ENCODE measurements at regions of chr17 and their contacts with region 1.

Region 1: GRCh38 chr17:44141717-44142285 is at the start of gene HROB:
- DNase-seq: peak; percentile 97
- H3K4me3 Mint-ChIP-seq: peak within 1 kb of the TSS; percentile 95
- H3K27ac Mint-ChIP-seq: peak within 1 kb of the TSS; percentile 95
- H3K4me1 Mint-ChIP-seq: peaks cover 16% of the 10 kb centered on the region
- H3K27me3 Mint-ChIP-seq: no peaks in the 10 kb centered on the region
- total RNA-seq, gene HROB: 23.0 and 23.1 TPM in 2 replicates

Region 2: GRCh38 chr17:43979011-43979410 is 162.8 kb before region 1 on chr17:
- intact Hi-C with region 1: no loop called
- DNase-seq: no peak
- H3K4me3 Mint-ChIP-seq: no peak overlapping the region
- H3K27ac Mint-ChIP-seq: no peak overlapping the region
- H3K4me1 Mint-ChIP-seq: no peaks in the 10 kb centered on the region
- H3K27me3 Mint-ChIP-seq: peaks cover 58% of the 10 kb centered on the region

Region 3: DNA sequence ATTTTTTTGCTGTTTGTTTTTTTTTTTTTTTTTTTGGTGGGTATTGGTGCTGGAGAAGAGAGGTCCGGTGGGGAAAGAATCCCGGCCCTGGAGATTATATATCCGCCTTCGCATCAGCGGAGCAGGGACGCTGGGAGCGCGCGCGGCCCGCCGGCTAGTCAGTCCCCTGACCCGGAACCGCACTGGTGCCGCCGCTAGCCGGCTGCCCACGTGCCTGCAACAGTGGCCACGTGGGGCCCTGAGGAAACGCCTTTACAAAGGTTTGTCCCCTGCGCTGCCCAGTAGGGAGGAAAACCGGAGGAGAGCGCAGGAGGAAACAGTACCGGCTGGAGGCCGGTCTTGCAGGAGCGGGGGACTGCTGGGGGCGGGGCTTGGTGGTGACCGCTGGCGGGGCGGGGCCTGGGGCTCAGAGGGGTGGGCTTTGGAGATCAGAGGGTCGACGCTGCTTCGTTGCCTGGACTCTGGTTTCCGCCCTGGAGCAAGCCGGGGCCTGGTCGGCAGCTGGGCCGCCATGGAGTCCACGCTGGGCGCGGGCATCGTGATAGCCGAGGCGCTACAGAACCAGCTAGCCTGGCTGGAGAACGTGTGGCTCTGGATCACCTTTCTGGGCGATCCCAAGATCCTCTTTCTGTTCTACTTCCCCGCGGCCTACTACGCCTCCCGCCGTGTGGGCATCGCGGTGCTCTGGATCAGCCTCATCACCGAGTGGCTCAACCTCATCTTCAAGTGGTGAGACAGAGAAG is 71.2 kb before region 1 on chr17 and contains the start of gene G6PC3:
- intact Hi-C with region 1: loop called (anchors 1 kb)
- DNase-seq: peak; percentile 78
- H3K4me3 Mint-ChIP-seq: peak within 1 kb of the TSS; percentile 98
- H3K27ac Mint-ChIP-seq: peak within 1 kb of the TSS; percentile 99
- H3K4me1 Mint-ChIP-seq: peaks cover 16% of the 10 kb centered on the region
- H3K27me3 Mint-ChIP-seq: no peaks in the 10 kb centered on the region
- total RNA-seq, gene G6PC3: 33.5 and 34.9 TPM in 2 replicates

Region 4: DNA sequence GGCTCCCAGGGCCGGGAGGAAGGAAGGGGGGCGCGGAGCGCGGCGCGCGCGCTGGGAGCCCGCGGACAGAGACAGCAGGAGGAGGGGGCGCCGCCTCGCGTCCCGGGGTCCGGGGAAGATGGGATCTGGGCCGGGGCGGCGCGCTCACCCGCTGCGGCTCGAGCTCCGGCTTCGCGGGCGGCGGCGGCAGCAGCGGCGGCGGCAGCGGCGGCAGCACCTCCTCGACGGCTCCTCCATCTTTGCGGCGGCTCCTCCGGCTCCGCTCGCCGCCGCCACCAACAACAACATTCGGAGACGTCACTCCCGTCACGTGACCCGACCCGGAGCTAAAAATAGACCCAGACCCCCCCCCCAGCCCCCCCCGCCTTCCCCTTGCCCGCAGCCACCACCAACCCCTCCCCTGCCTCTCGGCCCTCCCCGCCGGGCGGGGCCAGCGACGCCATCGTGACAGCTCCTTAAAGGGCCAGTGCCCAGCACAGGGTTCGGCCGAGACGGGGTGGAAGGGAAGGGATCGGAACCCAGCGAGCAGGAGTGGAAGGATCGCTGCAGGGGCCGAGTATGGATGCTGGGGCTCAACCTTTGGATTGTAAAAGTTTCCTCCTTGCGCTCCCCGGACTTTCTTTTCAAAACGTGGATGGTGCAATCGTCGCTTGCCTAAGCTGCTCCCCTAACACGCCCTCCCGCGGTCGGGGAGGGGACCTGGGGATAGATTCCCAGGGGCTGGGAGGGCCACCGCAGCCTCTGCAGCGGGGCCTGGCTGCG is 18.3 kb before region 1 on chr17 and contains the start of gene HDAC5:
- intact Hi-C with region 1: loop called (anchors 1 kb)
- DNase-seq: peak; percentile 92
- H3K4me3 Mint-ChIP-seq: peak within 1 kb of the TSS; percentile 91
- H3K27ac Mint-ChIP-seq: peak within 1 kb of the TSS; percentile 96
- H3K4me1 Mint-ChIP-seq: peaks cover 25% of the 10 kb centered on the region
- H3K27me3 Mint-ChIP-seq: peaks cover 12% of the 10 kb centered on the region
- total RNA-seq, gene HDAC5: 20.6 and 22.8 TPM in 2 replicates

Region 5: GRCh38 chr17:44170499-44171201 is 28.8 kb after region 1 on chr17 and contains the start of gene ASB16:
- intact Hi-C with region 1: loop called (anchors 1 kb)
- DNase-seq: no peak
- H3K4me3 Mint-ChIP-seq: no peak within 1 kb of the TSS
- H3K27ac Mint-ChIP-seq: no peak within 1 kb of the TSS
- H3K4me1 Mint-ChIP-seq: peaks cover 10% of the 10 kb centered on the region
- H3K27me3 Mint-ChIP-seq: no peaks in the 10 kb centered on the region
- total RNA-seq, gene ASB16: 0.31 and 0.42 TPM in 2 replicates

Region 6: DNA sequence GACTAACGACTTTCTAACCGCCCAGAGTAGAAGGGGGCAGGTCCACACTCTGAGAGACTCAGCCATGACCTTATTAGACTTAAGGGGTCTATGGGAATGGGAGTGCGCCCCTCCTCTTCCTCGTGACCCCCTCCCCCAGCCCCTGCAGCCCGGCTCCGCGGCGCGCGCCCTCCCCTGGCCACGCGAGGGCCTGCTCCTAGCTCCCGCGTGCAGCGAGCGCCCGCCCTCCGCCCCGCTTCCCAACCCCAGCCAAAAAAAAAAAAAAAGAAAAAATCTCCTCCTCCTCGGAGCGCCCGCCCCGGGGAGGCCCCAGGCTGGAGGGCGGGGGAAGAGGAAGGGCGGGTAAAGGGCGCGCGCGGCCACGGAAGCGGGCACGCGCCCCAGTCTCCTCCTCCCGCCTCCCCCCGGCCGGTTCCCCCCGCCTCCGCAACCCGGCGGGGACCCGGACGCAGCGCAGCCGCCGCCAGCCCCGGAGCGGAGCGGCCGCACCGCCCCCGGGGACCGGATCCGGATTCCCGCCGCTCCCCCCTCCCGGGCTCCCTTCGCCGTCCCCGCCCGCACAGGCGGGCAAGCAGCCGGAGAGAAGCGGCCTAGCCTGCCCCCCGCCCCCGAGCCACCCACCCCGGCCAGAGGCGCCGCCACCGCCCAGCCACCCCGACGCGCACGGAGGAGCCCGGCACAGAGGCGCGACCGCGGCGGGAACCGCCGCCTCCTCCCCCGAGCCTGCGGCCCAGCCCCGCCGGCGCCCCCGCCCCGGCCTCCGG is 76.7 kb after region 1 on chr17:
- intact Hi-C with region 1: loop called (anchors 1 kb)
- DNase-seq: peak; percentile 86
- H3K4me3 Mint-ChIP-seq: peak overlapping the region; percentile 98
- H3K27ac Mint-ChIP-seq: peak overlapping the region; percentile 96
- H3K4me1 Mint-ChIP-seq: peaks cover 45% of the 10 kb centered on the region
- H3K27me3 Mint-ChIP-seq: no peaks in the 10 kb centered on the region

Region 7: GRCh38 chr17:44464037-44464436 is 322.2 kb after region 1 on chr17:
- intact Hi-C with region 1: no loop called
- DNase-seq: no peak
- H3K4me3 Mint-ChIP-seq: no peak overlapping the region
- H3K27ac Mint-ChIP-seq: peak overlapping the region; percentile 55
- H3K4me1 Mint-ChIP-seq: peaks cover 10% of the 10 kb centered on the region
- H3K27me3 Mint-ChIP-seq: no peaks in the 10 kb centered on the region

Region 8: GRCh38 chr17:44708401-44709181 is 566.8 kb after region 1 on chr17 and contains the start of gene DBF4B:
- intact Hi-C with region 1: loop called (anchors 2 kb)
- DNase-seq: peak; percentile 81
- H3K4me3 Mint-ChIP-seq: no peak within 1 kb of the TSS
- H3K27ac Mint-ChIP-seq: no peak within 1 kb of the TSS
- H3K4me1 Mint-ChIP-seq: peaks cover 5% of the 10 kb centered on the region
- H3K27me3 Mint-ChIP-seq: peaks cover 7% of the 10 kb centered on the region
- total RNA-seq, gene DBF4B: 22.5 and 22.8 TPM in 2 replicates